ENCODE measurements at regions of chr18 and their contacts with region 1.

Region 1: GRCh38 chr18:46497129-46497528 is 159.9 kb downstream of the LOXHD1 start:
- DNase-seq: peak; percentile 19 to 24
- ATAC-seq: peak in 2 of 3 donors; percentile 49 to 57
- H3K4me3 ChIP-seq: no peak overlapping the region
- H3K4me3 Mint-ChIP-seq: no peak overlapping the region
- H3K27ac ChIP-seq: no peak overlapping the region
- H3K27ac Mint-ChIP-seq: no peak overlapping the region
- H3K4me1 ChIP-seq: no peaks in the 10 kb centered on the region
- H3K4me1 Mint-ChIP-seq: no peaks in the 10 kb centered on the region
- H3K27me3 ChIP-seq: peaks cover 6% of the 10 kb centered on the region
- H3K27me3 Mint-ChIP-seq: peaks cover 17 to 19% of the 10 kb centered on the region in 2 donors
- CTCF ChIP-seq: no peak

Region 2: DNA sequence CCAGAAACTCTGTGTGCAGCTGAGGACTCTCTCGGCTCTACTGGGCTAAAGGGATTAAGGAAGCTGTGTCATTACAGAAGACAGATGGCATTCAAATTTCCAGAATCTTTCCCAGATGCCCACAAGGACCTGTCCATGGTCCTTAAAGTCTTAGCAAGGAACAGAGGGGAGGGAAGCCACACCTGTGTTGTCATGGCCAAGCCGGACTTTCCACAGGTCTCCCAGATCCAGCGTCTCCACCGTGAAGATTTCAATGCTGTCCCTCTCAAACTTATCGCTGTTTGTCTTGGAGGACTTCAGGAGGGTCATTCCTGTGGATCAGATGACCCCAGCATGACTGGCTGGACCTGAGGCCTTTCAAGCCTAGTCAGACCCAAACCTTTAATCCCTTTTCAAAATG is 45.4 kb after region 1 on chr18:
- intact Hi-C with region 1: loop called (anchors 5 kb)
- DNase-seq: no peak
- ATAC-seq: no peak
- H3K4me3 ChIP-seq: no peak overlapping the region
- H3K4me3 Mint-ChIP-seq: no peak overlapping the region
- H3K27ac ChIP-seq: no peak overlapping the region
- H3K27ac Mint-ChIP-seq: no peak overlapping the region
- H3K4me1 ChIP-seq: no peaks in the 10 kb centered on the region
- H3K4me1 Mint-ChIP-seq: no peaks in the 10 kb centered on the region
- H3K27me3 ChIP-seq: no peaks in the 10 kb centered on the region
- H3K27me3 Mint-ChIP-seq: peaks cover 2 to 9% of the 10 kb centered on the region in 2 donors
- CTCF ChIP-seq: no peak